Posterior cingulate gyrus (tissue), 11 donors: ENCODE measurements at regions of chr9 and their contacts with region 1.

Region 1: GRCh38 chr9:4228606-4229005 is 71.3 kb downstream of the GLIS3 start:
- DNase-seq: no peak

Region 2: GRCh38 chr9:3385871-3386270 is 842.7 kb before region 1 on chr9:
- intact Hi-C with region 1: no loop called
- DNase-seq: no peak

Region 3: DNA sequence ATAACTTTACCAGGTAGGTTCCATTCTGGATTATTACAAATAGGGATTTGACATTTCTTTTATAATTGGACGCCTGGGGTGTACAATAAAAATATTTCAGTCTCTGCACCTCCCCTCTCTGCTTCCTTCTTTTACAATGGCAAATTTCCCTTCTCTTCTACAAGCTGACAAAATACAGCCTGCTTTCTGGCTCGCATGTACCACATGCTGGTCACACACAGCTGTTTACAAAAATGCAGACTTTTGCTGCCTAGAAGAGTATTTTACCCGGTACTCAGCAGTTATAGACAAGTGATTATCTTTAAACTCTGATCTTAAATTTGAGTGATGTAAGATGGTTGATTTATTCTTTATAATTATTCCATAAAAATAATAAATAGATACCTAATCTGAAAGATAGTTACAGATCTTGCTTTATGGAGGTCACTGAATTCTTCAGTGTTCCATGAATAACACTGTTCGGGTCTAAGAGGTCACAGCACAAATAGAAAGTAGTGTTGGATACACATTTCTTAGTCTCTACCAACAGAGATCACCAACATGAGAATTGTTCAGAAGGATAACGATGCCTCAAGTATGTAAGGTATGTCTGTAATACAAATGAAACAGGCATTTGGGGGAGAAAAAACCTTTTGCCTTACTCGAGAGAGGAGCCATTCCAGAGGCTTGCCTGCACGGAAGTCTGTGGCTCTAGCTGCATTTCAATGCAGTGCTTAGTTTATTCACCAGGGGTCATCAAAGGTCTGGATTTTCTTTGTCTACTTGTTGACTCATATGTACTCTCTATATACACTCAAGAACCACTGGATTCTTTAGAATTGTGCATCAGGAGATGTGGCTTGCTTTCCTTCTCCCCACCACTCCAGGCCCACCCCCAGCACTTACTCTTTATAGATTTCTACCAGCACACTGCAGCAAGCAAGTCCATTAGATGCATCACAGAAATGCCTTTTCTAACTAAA is 496.2 kb before region 1 on chr9:
- intact Hi-C with region 1: loop called (anchors 2 kb)
- DNase-seq: peak in 4 of 10 donors; percentile 12 to 31 (median 24)